ENCODE measurements at regions of chr17 and their contacts with region 1.

Region 1: DNA sequence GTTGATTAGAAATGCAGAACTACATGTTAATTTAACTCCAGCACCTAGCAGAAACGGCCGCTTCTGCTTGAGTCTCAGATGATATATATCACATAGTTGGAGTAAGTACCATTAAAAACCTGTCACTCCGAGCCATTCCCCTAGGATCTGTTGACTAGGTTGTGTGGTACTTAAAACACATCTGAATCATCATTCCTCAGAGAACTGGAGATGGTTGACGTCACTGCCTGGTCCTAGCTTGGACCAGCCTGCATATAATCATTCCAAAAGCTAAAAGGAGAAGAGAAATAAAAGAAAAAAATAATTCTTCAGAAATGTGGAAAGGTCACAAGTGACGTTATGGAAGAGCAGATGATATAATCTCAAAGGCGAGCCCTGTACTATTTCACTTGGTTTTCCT is 31.3 kb upstream of the RASL10B start:
- DNase-seq: no peak
- ATAC-seq: no peak
- H3K4me3 ChIP-seq: no peak overlapping the region
- H3K4me3 Mint-ChIP-seq: no peak overlapping the region
- H3K27ac ChIP-seq: no peak overlapping the region
- H3K27ac Mint-ChIP-seq: no peak overlapping the region
- H3K4me1 ChIP-seq: no peaks in the 10 kb centered on the region
- H3K4me1 Mint-ChIP-seq: peaks cover 22% of the 10 kb centered on the region
- H3K27me3 ChIP-seq: no peaks in the 10 kb centered on the region
- H3K27me3 Mint-ChIP-seq: no peaks in the 10 kb centered on the region
- CTCF ChIP-seq: no peak

Region 2: GRCh38 chr17:35684055-35684802 is 15.9 kb before region 1 on chr17:
- CTCF ChIA-PET with region 1: no interaction called
- POLR2A ChIA-PET with region 1: no interaction called
- intact Hi-C with region 1: no loop called
- DNase-seq: no peak
- ATAC-seq: no peak
- H3K4me3 ChIP-seq: no peak overlapping the region
- H3K4me3 Mint-ChIP-seq: no peak overlapping the region
- H3K27ac ChIP-seq: no peak overlapping the region
- H3K27ac Mint-ChIP-seq: no peak overlapping the region
- H3K4me1 ChIP-seq: no peaks in the 10 kb centered on the region
- H3K4me1 Mint-ChIP-seq: no peaks in the 10 kb centered on the region
- H3K27me3 ChIP-seq: no peaks in the 10 kb centered on the region
- H3K27me3 Mint-ChIP-seq: no peaks in the 10 kb centered on the region
- CTCF ChIP-seq: no peak

Region 3: DNA sequence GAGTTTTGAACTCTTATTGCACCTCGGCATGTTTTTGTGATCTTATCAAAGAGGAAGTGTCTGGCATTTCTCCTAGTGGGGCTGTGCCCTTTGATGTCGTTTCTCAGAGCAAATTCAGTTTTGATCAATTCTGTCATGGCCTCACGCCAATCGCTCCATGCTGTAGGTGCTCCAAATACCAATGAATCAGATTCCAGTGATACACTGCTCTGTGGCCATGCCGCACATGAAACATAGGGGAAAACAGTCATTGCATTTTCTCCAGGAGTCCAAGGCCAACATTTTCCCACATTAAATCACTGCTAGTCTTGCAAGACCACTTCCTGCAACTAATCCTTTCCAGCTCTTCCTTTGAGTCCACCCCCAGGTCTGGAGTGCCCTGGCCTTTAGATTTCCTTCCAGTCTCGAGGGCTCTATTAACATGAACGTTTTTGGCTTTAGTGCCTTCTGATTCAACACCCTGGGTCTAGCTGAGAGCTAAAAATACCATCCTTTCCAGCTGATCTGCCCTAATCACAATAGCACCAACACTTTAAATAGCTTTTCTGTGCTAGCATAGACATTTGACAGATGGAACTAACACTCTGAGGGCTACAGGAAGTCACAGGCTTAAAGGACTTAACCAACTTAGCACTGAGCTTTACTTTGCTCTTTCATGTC is 13.0 kb after region 1 on chr17:
- CTCF ChIA-PET with region 1: interaction called, 4 read pairs
- POLR2A ChIA-PET with region 1: interaction called, 3 read pairs
- intact Hi-C with region 1: loop called in 1 of 2 experiments (anchors 1 kb)
- DNase-seq: peak in 1 of 14 experiments; percentile 53
- ATAC-seq: no peak
- H3K4me3 ChIP-seq: no peak overlapping the region
- H3K4me3 Mint-ChIP-seq: no peak overlapping the region
- H3K27ac ChIP-seq: no peak overlapping the region
- H3K27ac Mint-ChIP-seq: no peak overlapping the region
- H3K4me1 ChIP-seq: peaks cover 18% of the 10 kb centered on the region
- H3K4me1 Mint-ChIP-seq: peaks cover 29% of the 10 kb centered on the region
- H3K27me3 ChIP-seq: no peaks in the 10 kb centered on the region
- H3K27me3 Mint-ChIP-seq: no peaks in the 10 kb centered on the region
- CTCF ChIP-seq: no peak